CD8-positive, alpha-beta memory T cell (primary cell): ENCODE measurements at regions of chr2 and their contacts with region 1.

Region 1: DNA sequence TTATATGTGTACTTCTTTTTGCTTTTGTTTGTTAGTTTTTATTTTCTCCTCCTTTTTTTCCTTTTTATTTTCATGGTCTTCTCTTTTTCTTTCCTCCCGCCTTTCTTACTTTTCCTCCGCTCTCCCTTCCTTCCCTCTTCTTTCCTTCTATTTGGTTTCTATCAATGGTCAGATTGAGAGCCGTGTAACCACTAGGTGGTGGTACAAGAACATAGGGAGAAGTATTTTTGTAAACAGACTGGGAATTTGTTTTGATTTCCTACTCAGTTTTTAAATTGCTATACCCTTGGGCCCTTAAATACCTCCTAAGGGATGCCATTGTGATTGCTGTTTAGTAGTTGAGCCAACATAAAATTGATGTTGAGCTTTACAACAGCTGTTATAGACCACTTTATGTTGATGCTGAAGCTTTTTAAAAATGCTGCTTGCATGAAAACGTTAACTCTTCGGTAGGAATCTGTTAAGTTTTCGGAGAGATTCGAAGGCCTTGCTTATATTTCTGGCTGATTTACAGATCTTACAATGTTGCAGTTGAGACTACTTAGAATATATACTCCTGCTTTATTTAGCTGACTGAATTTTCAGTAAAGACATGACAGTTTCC is 124.2 kb downstream of the UBE2E3 start:
- DNase-seq: peak in 3 of 5 donors; percentile 2 to 56 (median 49)
- H3K4me3 ChIP-seq: no peak overlapping the region
- H3K4me3 Mint-ChIP-seq: peak overlapping the region in 2 of 7 donors; percentile 3 to 27
- H3K27ac ChIP-seq: no peak overlapping the region
- H3K27ac Mint-ChIP-seq: peak overlapping the region; percentile 0 to 89 (median 26)
- H3K4me1 ChIP-seq: peaks cover 39% of the 10 kb centered on the region
- H3K4me1 Mint-ChIP-seq: peaks cover 38 to 54% (median 50%) of the 10 kb centered on the region in 3 donors
- H3K27me3 ChIP-seq: no peaks in the 10 kb centered on the region
- H3K27me3 Mint-ChIP-seq: peaks cover 0 to under 1% of the 10 kb centered on the region in 2 donors

Region 2: DNA sequence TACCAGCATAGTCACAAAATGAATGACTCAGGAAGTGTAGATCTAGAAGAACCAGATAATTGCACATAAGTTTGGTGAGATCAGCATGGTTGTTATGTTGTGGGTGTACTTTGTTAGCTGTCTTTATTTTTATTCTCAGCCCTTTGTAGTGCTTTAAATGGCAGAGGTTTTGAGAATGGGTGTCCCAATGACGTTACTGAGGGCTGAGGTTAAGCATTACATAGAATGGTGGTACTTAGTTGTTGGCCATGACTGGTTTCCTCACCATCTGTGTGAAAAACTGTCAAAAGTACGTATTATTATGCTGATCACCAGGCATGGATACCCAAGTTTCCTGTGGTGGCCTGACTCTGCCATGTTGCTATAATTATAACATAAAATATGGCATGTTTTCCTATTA is 41.6 kb after region 1 on chr2:
- CTCF ChIA-PET with region 1: interaction called, 24 read pairs
- POLR2A ChIA-PET with region 1: interaction called, 3 read pairs
- DNase-seq: peak in 2 of 5 donors; percentile 61 to 62
- H3K4me3 ChIP-seq: peak overlapping the region; percentile 2
- H3K4me3 Mint-ChIP-seq: peak overlapping the region in 2 of 7 donors; percentile 11 to 49
- H3K27ac ChIP-seq: peak overlapping the region; percentile 13
- H3K27ac Mint-ChIP-seq: peak overlapping the region; percentile 10 to 89 (median 80)
- H3K4me1 ChIP-seq: peaks cover 76% of the 10 kb centered on the region
- H3K4me1 Mint-ChIP-seq: peaks cover 70 to 90% (median 89%) of the 10 kb centered on the region in 3 donors
- H3K27me3 ChIP-seq: no peaks in the 10 kb centered on the region
- H3K27me3 Mint-ChIP-seq: no peaks in the 10 kb centered on the region

Region 3: DNA sequence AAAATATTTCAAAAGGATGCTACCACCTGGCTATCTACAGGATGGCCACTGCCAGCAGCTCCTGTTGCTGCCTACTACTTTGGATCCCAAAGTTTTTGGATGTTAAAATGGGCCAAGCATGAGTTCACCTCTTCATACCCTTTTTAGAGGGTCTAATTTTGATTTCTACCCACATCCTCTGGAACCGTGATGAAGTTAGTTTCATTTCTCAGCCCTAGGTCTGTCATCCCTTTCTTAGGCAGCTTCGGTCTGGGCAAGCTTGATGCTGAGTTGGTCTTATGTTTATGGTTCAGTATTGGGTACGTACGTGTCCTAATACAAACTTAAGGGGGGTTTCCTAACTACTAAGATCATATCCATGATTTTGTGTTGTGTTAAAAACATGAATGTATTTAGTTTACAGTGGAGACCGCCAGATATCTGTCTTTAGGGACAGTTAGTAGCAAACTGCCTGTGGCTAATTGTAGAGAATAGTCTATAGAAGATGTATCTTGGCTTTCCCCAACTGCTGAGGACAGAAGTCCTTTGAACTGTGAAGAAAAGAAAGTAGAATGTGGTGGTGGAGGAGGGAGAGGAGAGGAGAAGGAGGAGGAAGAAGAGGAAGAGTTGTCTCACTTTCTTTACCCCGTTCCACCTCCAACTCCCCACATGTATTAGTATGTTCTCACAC is 60.7 kb after region 1 on chr2:
- CTCF ChIA-PET with region 1: interaction called, 14 read pairs
- POLR2A ChIA-PET with region 1: no interaction called
- DNase-seq: peak in 3 of 5 donors; percentile 44 to 67 (median 60)
- H3K4me3 ChIP-seq: peak overlapping the region; percentile 38
- H3K4me3 Mint-ChIP-seq: peak overlapping the region; percentile 49 to 89 (median 73)
- H3K27ac ChIP-seq: peak overlapping the region; percentile 65
- H3K27ac Mint-ChIP-seq: peak overlapping the region; percentile 96 to 100 (median 98)
- H3K4me1 ChIP-seq: peaks cover 49% of the 10 kb centered on the region
- H3K4me1 Mint-ChIP-seq: peaks cover 78 to 93% (median 89%) of the 10 kb centered on the region in 3 donors
- H3K27me3 ChIP-seq: no peaks in the 10 kb centered on the region
- H3K27me3 Mint-ChIP-seq: no peaks in the 10 kb centered on the region

Region 4: DNA sequence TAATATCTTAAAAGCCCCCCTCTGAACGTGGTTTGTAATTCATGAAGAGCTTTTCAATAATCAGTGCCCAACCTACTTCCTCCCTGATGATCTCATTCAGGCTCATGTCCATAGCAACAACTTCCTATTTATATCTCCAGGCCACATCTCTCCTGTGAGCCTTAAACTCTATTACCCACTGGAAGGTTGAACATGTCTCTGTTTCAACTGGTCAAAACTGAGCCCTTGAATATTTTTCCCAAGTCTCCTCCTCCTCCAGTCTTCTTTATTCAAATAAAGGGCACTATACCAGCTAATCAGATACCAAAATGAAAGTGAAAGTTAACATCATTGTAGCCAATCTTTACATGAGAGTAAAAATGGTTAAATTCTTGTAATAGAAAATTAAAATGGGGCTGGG is 288.9 kb after region 1 on chr2:
- CTCF ChIA-PET with region 1: interaction called, 4 read pairs
- POLR2A ChIA-PET with region 1: interaction called, 19 read pairs
- DNase-seq: peak in 2 of 5 donors; percentile 5 to 58
- H3K4me3 ChIP-seq: peak overlapping the region; percentile 24
- H3K4me3 Mint-ChIP-seq: peak overlapping the region; percentile 80 to 95 (median 87)
- H3K27ac ChIP-seq: peak overlapping the region; percentile 78
- H3K27ac Mint-ChIP-seq: peak overlapping the region; percentile 91 to 99 (median 96)
- H3K4me1 ChIP-seq: peaks cover 19% of the 10 kb centered on the region
- H3K4me1 Mint-ChIP-seq: peaks cover 28 to 58% (median 43%) of the 10 kb centered on the region in 3 donors
- H3K27me3 ChIP-seq: no peaks in the 10 kb centered on the region
- H3K27me3 Mint-ChIP-seq: no peaks in the 10 kb centered on the region

Region 5: DNA sequence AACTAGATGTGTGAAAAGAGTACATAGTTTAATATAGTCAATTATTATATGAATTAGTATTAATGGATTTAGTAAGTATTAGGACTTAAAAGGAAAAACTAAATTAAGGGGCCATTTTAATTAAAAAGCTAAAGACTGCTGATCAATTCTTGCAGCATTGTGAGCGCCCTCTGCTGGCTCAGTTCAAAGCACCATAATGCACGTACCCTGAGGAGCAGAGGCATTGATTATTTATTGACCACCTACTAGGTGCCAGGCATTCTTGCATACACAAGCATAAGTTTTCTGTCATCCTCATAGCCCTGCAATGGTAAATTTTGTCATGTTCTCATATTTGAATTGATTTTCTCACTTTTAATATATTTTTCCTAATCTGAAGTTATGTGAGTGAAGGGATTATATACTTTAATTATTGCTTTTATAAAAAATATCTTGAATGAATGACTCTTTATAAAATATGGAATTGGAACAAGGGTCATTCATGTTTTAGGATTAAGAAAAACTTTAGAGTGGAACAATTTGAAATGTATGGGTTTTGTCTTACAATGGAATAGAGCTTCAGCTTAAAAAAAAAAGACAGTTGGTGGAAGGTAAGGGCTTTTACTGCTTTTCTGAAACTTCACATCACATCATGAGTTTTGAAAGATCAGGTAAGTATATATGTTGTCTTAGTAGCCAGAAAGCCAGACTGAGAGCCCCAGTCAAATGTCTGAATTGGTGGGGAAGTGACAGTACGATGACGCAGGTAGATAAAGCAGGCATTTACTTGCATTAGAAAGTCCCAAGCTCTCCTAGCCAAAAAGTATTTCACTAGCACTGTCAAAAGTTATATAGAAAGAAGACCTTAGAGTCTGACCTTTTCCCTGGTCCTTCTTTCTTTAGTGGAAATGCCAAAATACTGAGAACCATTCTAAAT is 362.3 kb after region 1 on chr2:
- CTCF ChIA-PET with region 1: interaction called, 12 read pairs
- POLR2A ChIA-PET with region 1: no interaction called
- DNase-seq: peak; percentile 61 to 86 (median 67)
- H3K4me3 ChIP-seq: no peak overlapping the region
- H3K4me3 Mint-ChIP-seq: peak overlapping the region; percentile 60 to 89 (median 69)
- H3K27ac ChIP-seq: peak overlapping the region; percentile 40
- H3K27ac Mint-ChIP-seq: peak overlapping the region; percentile 86 to 96 (median 92)
- H3K4me1 ChIP-seq: peaks cover 76% of the 10 kb centered on the region
- H3K4me1 Mint-ChIP-seq: peaks cover 81 to 98% (median 90%) of the 10 kb centered on the region in 3 donors
- H3K27me3 ChIP-seq: no peaks in the 10 kb centered on the region
- H3K27me3 Mint-ChIP-seq: no peaks in the 10 kb centered on the region